GM10248 (cell line): ENCODE measurements at regions of chr13 and their contacts with region 1.

Region 1: GRCh38 chr13:33110713-33111413 is 94.6 kb downstream of the KL start:
- DNase-seq: peak; percentile 38
- CTCF ChIP-seq: no peak

Region 2: DNA sequence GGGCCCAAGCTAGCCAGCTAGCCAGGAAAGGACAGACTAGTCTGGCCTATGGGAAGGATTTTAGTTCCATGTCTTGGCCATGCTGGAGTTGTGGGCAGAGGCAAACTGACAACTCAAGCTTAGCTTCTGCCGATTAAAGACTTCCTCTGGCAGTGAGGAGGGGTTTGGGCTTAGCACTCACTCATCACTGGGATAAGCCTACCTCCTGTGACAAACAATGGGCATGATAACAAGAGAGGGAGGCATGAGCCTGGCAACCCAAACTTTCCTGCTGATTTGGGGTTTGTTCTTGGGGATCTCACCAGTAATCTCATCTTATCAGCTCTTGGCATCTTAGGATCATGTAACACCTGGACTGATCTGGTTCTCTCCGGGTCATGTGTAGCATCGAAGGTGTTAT is 11.0 kb before region 1 on chr13:
- CTCF ChIA-PET with region 1: interaction called, 10 read pairs
- POLR2A ChIA-PET with region 1: no interaction called
- DNase-seq: no peak
- CTCF ChIP-seq: no peak

Region 3: GRCh38 chr13:33125821-33126570 is 15.1 kb after region 1 on chr13:
- CTCF ChIA-PET with region 1: interaction called, 10 read pairs
- POLR2A ChIA-PET with region 1: no interaction called
- DNase-seq: no peak
- CTCF ChIP-seq: no peak